Activated CD8-positive, alpha-beta memory T cell treated with anti-CD3 and anti-CD28 coated beads, Interleukin-2, amount 10 ng/mL, durations not matched to agents 7 days and 5 days (primary cell): ENCODE measurements at regions of chr2 and their contacts with region 1.

Region 1: GRCh38 chr2:44479122-44479887 is 117.6 kb downstream of the CAMKMT start:
- DNase-seq: peak; percentile 58
- ATAC-seq: peak; percentile 100
- H3K4me3 Mint-ChIP-seq: no peak overlapping the region
- H3K27ac Mint-ChIP-seq: peak overlapping the region; percentile 6
- H3K4me1 Mint-ChIP-seq: peaks cover 5% of the 10 kb centered on the region
- H3K27me3 Mint-ChIP-seq: no peaks in the 10 kb centered on the region

Region 2: GRCh38 chr2:43798300-43798699 is 681.0 kb before region 1 on chr2:
- CTCF ChIA-PET with region 1: no interaction called
- DNase-seq: no peak
- ATAC-seq: no peak
- H3K4me3 Mint-ChIP-seq: no peak overlapping the region
- H3K27ac Mint-ChIP-seq: no peak overlapping the region
- H3K4me1 Mint-ChIP-seq: peaks cover 2% of the 10 kb centered on the region
- H3K27me3 Mint-ChIP-seq: no peaks in the 10 kb centered on the region

Region 3: DNA sequence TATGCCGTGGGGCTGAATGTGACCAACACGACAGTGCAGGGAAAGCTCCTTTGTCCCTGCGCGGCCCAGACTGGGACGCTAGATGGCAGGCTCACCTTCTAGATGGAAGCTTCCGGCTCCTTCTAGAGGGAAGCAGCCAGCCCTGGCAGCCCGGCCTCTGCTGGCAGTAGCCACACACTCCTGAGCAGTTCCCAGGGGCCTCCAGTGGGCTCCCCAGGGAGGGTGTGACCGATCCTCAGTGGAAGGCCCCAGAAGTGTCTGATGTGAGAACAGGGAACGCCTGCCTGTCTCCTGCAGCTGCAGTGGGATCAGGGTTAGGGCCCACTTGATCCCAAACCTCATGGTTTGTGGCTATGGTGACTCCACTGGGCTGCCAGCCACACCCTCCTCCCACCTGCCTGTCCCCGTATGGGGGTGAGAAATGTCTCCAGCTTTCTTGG is 435.0 kb before region 1 on chr2:
- CTCF ChIA-PET with region 1: interaction called, 35 read pairs
- DNase-seq: peak; percentile 92
- ATAC-seq: peak; percentile 100
- H3K4me3 Mint-ChIP-seq: no peak overlapping the region
- H3K27ac Mint-ChIP-seq: no peak overlapping the region
- H3K4me1 Mint-ChIP-seq: peaks cover 2% of the 10 kb centered on the region
- H3K27me3 Mint-ChIP-seq: no peaks in the 10 kb centered on the region

Region 4: GRCh38 chr2:44324971-44325426 is 154.3 kb before region 1 on chr2:
- CTCF ChIA-PET with region 1: no interaction called
- DNase-seq: no peak
- ATAC-seq: no peak
- H3K4me3 Mint-ChIP-seq: no peak overlapping the region
- H3K27ac Mint-ChIP-seq: no peak overlapping the region
- H3K4me1 Mint-ChIP-seq: no peaks in the 10 kb centered on the region
- H3K27me3 Mint-ChIP-seq: no peaks in the 10 kb centered on the region

Region 5: DNA sequence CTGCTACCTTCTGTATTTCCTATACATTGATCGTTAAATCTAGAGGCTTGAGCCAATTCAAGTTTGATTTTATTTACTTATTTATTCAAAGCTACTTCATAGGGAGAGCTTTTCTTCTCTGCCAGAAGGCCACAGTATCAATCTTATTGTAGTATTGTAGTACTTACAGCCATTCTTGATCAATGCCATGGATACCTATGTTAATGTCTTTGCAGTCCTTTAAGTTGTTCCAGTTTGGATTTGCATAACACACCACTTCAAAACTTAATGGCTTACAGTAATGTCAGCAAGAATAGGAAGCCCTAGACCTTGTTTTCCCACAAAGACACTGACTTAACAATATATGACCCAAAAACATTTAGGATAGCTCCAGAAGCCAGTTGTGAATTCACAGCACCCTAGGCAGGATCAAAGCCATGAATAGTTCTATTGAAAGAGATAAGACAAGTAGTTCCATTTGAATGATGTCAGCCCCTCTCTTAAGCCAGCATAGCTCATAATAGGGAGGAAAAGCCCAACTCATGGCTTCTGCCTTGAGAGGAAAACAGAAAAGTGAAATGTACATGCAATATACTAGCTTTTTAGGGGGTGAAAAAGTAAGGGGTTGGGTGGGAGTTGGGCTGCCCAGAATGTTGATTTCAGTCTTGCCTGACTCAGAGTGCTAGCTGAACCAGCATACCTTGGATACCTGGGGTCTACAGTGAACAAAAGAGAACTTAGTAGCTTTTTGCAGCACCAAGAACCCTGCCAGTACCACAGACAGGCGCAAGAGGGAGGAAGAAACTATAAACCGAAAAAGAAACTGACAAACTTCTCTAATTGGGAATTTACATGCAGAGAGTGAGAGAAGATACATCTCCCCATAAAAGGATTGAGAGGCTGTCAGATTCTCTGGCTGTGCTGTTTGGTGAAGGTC is 16.1 kb before region 1 on chr2:
- CTCF ChIA-PET with region 1: interaction called, 28 read pairs
- DNase-seq: no peak
- ATAC-seq: no peak
- H3K4me3 Mint-ChIP-seq: no peak overlapping the region
- H3K27ac Mint-ChIP-seq: no peak overlapping the region
- H3K4me1 Mint-ChIP-seq: no peaks in the 10 kb centered on the region
- H3K27me3 Mint-ChIP-seq: no peaks in the 10 kb centered on the region

Region 6: GRCh38 chr2:44490726-44491125 is 11.4 kb after region 1 on chr2:
- CTCF ChIA-PET with region 1: interaction called, 13 read pairs
- DNase-seq: no peak
- ATAC-seq: no peak
- H3K4me3 Mint-ChIP-seq: no peak overlapping the region
- H3K27ac Mint-ChIP-seq: no peak overlapping the region
- H3K4me1 Mint-ChIP-seq: no peaks in the 10 kb centered on the region
- H3K27me3 Mint-ChIP-seq: no peaks in the 10 kb centered on the region

Region 7: DNA sequence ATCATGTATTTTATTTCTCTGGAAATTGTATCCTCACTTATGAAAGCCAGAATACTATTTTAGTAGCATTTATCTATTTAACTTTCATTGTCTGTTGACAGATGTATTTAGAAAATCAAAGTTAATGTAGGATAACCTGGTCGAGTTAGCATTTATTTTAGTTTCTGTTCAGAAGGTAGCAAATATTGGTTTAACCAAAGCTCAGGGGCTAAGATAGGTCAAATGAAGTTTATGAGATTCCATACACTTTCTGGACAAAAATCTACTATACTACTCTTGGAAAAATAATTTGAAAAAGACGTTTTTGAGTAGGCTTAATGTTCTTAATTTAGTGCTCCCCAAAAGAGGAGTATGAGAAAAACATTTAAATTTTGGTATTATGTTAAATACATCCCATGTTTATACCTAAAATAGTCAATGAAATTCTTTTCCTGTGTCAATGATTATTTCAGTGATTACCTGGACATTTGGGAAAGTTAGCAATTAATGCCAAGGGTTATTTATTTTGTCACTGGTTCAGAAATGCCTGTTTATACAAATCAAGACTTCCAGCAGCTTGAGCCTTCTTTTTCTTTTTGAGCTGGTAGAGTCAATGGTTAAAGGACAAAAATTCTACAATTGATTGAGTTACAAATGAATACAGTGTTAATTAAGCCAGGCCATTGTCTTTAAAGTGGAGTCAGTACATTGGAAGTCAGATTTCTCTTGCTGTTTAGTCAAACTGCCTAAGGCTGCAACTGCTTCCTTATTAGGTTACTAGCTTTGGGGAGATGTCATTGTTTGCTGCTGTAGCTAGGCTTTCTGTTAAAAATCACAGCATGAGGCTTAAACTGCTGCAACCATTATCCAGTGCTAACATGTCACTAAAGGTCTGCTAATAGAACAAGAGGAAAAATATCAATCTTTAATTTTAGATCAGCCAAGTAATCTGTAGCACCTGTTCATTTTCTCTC is 64.7 kb after region 1 on chr2:
- CTCF ChIA-PET with region 1: interaction called, 10 read pairs
- DNase-seq: no peak
- ATAC-seq: no peak
- H3K4me3 Mint-ChIP-seq: no peak overlapping the region
- H3K27ac Mint-ChIP-seq: no peak overlapping the region
- H3K4me1 Mint-ChIP-seq: peaks cover 2% of the 10 kb centered on the region
- H3K27me3 Mint-ChIP-seq: no peaks in the 10 kb centered on the region

Region 8: GRCh38 chr2:44578421-44579135 is 99.3 kb after region 1 on chr2:
- CTCF ChIA-PET with region 1: interaction called, 11 read pairs
- DNase-seq: no peak
- ATAC-seq: peak; percentile 83
- H3K4me3 Mint-ChIP-seq: peak overlapping the region; percentile 44
- H3K27ac Mint-ChIP-seq: peak overlapping the region; percentile 47
- H3K4me1 Mint-ChIP-seq: peaks cover 24% of the 10 kb centered on the region
- H3K27me3 Mint-ChIP-seq: no peaks in the 10 kb centered on the region

Region 9: DNA sequence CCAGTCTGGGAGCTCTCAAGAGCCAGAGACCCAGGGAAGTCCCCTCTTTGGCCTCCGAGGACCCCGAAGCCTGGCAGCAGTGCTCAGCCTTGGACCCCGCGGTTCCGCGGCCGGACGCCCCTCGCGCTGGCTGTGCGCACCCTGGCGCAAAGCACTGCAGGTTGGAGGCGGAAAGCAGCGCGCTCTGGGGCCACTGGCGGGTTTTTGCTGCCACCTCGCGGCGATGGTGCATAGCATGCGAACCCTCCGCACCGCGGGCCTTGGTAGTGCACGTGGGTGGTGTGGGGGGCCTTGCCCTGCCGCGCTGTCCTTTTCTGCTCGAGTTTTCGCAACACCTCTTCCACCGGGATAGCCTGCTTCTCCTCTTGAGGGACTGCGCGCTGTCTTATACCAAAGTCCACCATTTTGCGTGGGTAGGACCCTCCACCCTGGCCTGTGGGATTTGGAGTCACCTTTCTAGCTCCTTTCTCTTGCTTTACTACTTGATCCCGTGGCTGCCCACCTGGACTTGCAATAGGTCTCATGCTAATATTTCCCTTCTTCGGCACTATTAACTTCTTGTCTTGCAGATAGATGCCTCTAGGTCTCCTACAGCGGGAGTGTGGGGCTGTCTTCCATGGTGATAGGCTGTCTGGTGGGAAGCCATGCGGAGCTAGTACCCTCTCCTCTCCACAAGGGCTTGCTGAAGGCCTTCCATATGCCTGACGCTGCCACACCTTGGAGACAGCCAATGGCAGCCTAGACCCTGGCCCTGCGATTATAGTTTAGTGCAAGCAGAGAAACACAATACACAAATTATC is 476.5 kb after region 1 on chr2:
- CTCF ChIA-PET with region 1: interaction called, 99 read pairs
- DNase-seq: peak; percentile 83
- ATAC-seq: peak; percentile 75
- H3K4me3 Mint-ChIP-seq: no peak overlapping the region
- H3K27ac Mint-ChIP-seq: no peak overlapping the region
- H3K4me1 Mint-ChIP-seq: peaks cover 14% of the 10 kb centered on the region
- H3K27me3 Mint-ChIP-seq: peaks cover 73% of the 10 kb centered on the region